Motor neuron (in vitro differentiated cells): ENCODE measurements at regions of chr6 and their contacts with region 1.

Region 1: GRCh38 chr6:169831450-169832246 is 80.2 kb downstream of the ERMARD start:
- ATAC-seq: peak; percentile 80 to 99 (median 94)
- H3K4me3 ChIP-seq: no peak overlapping the region
- H3K27ac ChIP-seq: no peak overlapping the region
- H3K4me1 ChIP-seq: peaks cover 4 to 5% of the 10 kb centered on the region in 2 donors

Region 2: GRCh38 chr6:170030821-170031471 is 199.3 kb after region 1 on chr6:
- in situ Hi-C with region 1: no loop called
- ATAC-seq: peak in 7 of 8 experiments; percentile 15 to 94 (median 66)
- H3K4me3 ChIP-seq: no peak overlapping the region
- H3K27ac ChIP-seq: no peak overlapping the region
- H3K4me1 ChIP-seq: peaks cover 0 to 3% of the 10 kb centered on the region in 2 donors

Region 3: GRCh38 chr6:170295510-170296422 is 464.1 kb after region 1 on chr6:
- in situ Hi-C with region 1: loop called in 3 of 9 experiments (anchors 25 kb)
- ATAC-seq: peak; percentile 43 to 78 (median 58)
- H3K4me3 ChIP-seq: peak overlapping the region; percentile 17 to 41 (median 38)
- H3K27ac ChIP-seq: peak overlapping the region in 1 of 2 donors; percentile 83
- H3K4me1 ChIP-seq: peaks cover 52 to 58% of the 10 kb centered on the region in 2 donors

Region 4: DNA sequence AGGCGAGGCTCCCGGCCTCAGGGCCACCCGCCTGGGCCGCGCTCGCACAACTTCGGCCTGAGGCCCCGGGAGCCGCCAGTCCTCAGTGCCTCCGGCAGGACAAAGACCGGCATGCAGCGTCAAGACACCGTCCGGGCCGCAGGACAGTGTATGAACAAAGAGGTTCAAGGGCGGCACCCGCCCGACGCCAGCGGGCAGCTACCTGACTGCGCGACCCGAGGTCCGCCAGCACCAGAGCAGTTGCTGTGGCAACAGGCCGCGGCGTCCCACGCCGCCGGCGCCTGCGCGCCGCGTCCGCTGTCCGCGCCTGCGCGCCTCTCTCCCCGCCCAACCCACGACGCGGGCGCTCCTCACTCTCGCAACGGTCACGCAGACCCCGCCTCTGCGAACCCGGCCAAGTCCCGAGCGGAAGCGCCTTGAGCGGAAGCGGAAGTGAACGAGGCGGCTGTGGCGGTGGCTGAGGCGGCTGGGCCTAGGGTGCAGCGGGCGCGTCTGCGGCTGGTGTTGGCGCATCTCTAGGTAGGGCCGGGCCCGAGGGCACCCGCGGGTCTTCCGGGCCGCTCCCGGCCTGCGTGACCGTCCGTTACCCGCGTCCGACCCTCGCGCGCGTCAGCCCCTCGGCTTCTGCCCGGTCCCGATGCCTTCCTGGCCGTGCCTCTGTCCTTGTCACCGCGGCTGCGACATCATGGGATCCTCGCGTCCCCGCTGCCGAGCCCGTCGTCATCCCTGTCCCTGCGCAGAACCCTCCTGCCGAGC is 474.9 kb after region 1 on chr6 and contains the start of gene FAM120B:
- in situ Hi-C with region 1: loop called in 1 of 9 experiments (anchors 25 kb)
- ATAC-seq: peak; percentile 93 to 96 (median 96)
- H3K4me3 ChIP-seq: peak within 1 kb of the TSS; percentile 58 to 90 (median 70)
- H3K27ac ChIP-seq: peak within 1 kb of the TSS; percentile 80 to 95
- H3K4me1 ChIP-seq: peaks cover 21 to 25% of the 10 kb centered on the region in 2 donors
- total RNA-seq, gene FAM120B: 15.9 to 35.4 (median 22.2) TPM